ENCODE measurements at regions of chr4 and their contacts with region 1.

Region 1: DNA sequence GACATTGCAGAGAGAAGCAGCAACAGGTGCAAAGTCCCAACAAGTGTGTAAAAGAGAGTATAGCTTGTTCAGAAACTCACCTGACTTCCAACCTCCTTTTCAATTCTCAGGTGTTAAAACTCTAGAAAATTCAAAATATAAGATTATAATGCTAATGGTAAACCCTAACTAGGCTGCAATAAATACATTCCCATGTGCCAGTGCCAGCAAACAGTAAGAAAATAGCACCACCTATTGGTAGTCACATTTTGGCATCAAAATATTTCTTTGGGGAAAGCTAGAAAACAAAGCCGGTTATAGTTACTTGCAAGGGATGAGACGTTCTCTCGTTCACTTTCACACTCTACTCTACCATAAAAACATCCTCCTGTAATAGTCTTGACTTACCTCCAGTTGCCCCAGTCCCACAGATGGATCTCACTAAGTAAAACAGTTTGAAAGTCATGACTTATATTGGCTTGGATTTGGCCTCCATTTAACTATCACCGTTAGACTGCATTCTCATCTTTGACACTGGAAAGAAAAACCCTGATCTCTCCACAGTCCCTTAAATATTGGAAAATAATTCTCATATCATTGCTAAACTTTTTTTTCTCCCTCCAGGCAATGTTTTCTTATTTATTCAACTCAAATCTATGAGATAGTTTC is 9.6 kb downstream of the BMP3 start:
- DNase-seq: no peak
- ATAC-seq: peak; percentile 42
- H3K4me3 Mint-ChIP-seq: no peak overlapping the region
- H3K27ac Mint-ChIP-seq: no peak overlapping the region
- H3K4me1 Mint-ChIP-seq: peaks cover 16% of the 10 kb centered on the region
- H3K27me3 Mint-ChIP-seq: no peaks in the 10 kb centered on the region
- CTCF ChIP-seq: peak; percentile 62

Region 2: DNA sequence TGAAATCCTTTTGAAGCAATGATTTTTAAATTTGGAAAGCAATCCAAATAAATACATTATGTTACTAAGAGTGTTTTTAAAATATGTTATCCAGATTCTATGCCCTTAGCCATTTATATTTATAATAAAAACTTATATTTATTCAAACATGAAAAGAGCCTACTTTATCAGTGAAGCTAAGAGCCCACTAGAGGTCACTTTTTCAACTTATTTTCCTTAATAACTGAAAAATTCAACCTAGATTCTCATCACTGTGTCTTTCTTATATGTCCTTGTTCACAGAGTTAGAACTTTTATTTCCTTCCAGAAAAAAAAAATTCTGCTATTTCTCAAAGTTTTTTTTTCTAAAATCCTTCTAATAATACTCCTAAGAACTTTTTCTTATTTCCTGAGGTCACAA is 819.0 kb before region 1 on chr4:
- CTCF ChIA-PET with region 1: interaction called, 6 read pairs
- POLR2A ChIA-PET with region 1: no interaction called
- intact Hi-C with region 1: loop called (anchors 1 kb)
- DNase-seq: no peak
- ATAC-seq: no peak
- H3K4me3 Mint-ChIP-seq: no peak overlapping the region
- H3K27ac Mint-ChIP-seq: no peak overlapping the region
- H3K4me1 Mint-ChIP-seq: no peaks in the 10 kb centered on the region
- H3K27me3 Mint-ChIP-seq: peaks cover 19% of the 10 kb centered on the region
- CTCF ChIP-seq: no peak

Region 3: GRCh38 chr4:80365928-80366327 is 674.2 kb before region 1 on chr4:
- CTCF ChIA-PET with region 1: interaction called, 117 read pairs
- POLR2A ChIA-PET with region 1: no interaction called
- intact Hi-C with region 1: loop called (anchors 1 kb)
- DNase-seq: no peak
- ATAC-seq: peak; percentile 74
- H3K4me3 Mint-ChIP-seq: no peak overlapping the region
- H3K27ac Mint-ChIP-seq: no peak overlapping the region
- H3K4me1 Mint-ChIP-seq: peaks cover 4% of the 10 kb centered on the region
- H3K27me3 Mint-ChIP-seq: peaks cover 2% of the 10 kb centered on the region
- CTCF ChIP-seq: no peak

Region 4: DNA sequence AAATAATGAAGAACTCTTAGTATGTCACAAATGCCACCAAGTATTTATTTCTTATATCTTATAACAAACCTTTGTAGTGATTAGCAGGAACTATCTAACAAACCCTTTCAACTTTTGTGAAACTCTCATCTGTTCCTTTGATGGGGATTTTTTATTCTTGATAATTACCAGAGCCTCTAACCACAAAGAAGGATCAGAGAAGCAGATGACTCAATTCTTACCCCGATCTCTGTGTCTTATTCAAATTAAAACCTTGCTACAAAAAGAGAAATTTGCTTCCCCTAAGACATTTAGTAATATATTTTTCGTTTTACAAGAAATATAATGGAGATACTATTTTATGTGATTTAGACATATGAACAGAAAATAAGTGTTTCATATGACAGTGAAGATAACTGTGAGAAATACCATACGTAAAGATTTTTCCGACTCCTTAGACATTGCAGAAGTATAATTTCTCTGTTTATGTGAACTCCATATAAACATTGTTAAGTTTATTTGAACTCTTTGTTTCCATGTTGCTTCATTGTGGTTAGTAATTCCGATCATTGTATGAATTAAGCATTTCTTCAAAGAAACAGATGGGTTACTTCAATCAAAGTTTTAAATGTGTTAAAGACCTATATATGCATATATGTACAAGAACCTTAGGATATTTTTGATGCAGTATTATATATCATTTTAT is 499.2 kb before region 1 on chr4:
- CTCF ChIA-PET with region 1: no interaction called
- POLR2A ChIA-PET with region 1: no interaction called
- intact Hi-C with region 1: loop called (anchors 5 kb)
- DNase-seq: no peak
- ATAC-seq: peak; percentile 84
- H3K4me3 Mint-ChIP-seq: no peak overlapping the region
- H3K27ac Mint-ChIP-seq: no peak overlapping the region
- H3K4me1 Mint-ChIP-seq: peaks cover 13% of the 10 kb centered on the region
- H3K27me3 Mint-ChIP-seq: peaks cover 7% of the 10 kb centered on the region
- CTCF ChIP-seq: no peak

Region 5: GRCh38 chr4:80619070-80619674 is 421.0 kb before region 1 on chr4:
- CTCF ChIA-PET with region 1: interaction called, 4 read pairs
- POLR2A ChIA-PET with region 1: no interaction called
- intact Hi-C with region 1: loop called (anchors 1 kb)
- DNase-seq: no peak
- ATAC-seq: no peak
- H3K4me3 Mint-ChIP-seq: no peak overlapping the region
- H3K27ac Mint-ChIP-seq: no peak overlapping the region
- H3K4me1 Mint-ChIP-seq: no peaks in the 10 kb centered on the region
- H3K27me3 Mint-ChIP-seq: no peaks in the 10 kb centered on the region
- CTCF ChIP-seq: no peak

Region 6: DNA sequence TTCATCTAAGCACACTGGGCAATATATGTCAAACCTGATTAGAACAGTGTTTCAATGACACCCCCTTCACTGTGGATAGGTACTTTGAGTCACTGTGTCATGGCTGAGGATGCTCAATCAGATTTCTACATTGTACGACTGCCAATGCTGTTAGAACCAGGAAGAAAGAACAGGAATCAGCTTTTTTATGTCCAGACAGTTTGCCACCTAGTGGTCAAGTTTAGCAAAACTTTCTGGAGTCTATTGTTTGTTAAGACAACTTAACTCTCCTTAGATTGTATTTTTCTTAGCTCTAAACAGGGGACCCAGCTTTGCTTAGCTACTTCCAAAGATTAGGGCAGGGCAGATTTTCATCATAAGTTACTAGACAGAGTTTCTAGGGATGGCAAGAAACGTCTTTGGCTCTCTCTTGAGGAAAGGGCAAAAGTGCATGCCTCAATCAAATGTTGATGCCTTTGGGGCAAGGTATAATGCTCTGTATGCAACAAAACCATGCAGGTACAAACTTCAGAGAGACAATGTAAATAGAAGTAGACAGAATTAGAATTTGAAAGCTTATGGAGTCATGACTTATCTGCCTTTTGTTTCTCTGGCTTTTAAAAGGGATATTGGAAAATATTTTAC is 50.1 kb before region 1 on chr4:
- CTCF ChIA-PET with region 1: interaction called, 22 read pairs
- POLR2A ChIA-PET with region 1: no interaction called
- intact Hi-C with region 1: loop called (anchors 1 kb)
- DNase-seq: no peak
- ATAC-seq: peak; percentile 56
- H3K4me3 Mint-ChIP-seq: no peak overlapping the region
- H3K27ac Mint-ChIP-seq: no peak overlapping the region
- H3K4me1 Mint-ChIP-seq: peaks cover 31% of the 10 kb centered on the region
- H3K27me3 Mint-ChIP-seq: no peaks in the 10 kb centered on the region
- CTCF ChIP-seq: no peak

Region 7: GRCh38 chr4:81052119-81053068 is 12.3 kb after region 1 on chr4:
- CTCF ChIA-PET with region 1: interaction called, 21 read pairs
- POLR2A ChIA-PET with region 1: no interaction called
- intact Hi-C with region 1: no loop called
- DNase-seq: peak; percentile 31
- ATAC-seq: peak; percentile 84
- H3K4me3 Mint-ChIP-seq: no peak overlapping the region
- H3K27ac Mint-ChIP-seq: no peak overlapping the region
- H3K4me1 Mint-ChIP-seq: peaks cover 14% of the 10 kb centered on the region
- H3K27me3 Mint-ChIP-seq: no peaks in the 10 kb centered on the region
- CTCF ChIP-seq: no peak

Region 8: GRCh38 chr4:81106150-81106549 is 66.0 kb after region 1 on chr4:
- CTCF ChIA-PET with region 1: no interaction called
- POLR2A ChIA-PET with region 1: no interaction called
- intact Hi-C with region 1: no loop called
- DNase-seq: no peak
- ATAC-seq: no peak
- H3K4me3 Mint-ChIP-seq: no peak overlapping the region
- H3K27ac Mint-ChIP-seq: no peak overlapping the region
- H3K4me1 Mint-ChIP-seq: peaks cover 12% of the 10 kb centered on the region
- H3K27me3 Mint-ChIP-seq: no peaks in the 10 kb centered on the region
- CTCF ChIP-seq: no peak

Region 9: DNA sequence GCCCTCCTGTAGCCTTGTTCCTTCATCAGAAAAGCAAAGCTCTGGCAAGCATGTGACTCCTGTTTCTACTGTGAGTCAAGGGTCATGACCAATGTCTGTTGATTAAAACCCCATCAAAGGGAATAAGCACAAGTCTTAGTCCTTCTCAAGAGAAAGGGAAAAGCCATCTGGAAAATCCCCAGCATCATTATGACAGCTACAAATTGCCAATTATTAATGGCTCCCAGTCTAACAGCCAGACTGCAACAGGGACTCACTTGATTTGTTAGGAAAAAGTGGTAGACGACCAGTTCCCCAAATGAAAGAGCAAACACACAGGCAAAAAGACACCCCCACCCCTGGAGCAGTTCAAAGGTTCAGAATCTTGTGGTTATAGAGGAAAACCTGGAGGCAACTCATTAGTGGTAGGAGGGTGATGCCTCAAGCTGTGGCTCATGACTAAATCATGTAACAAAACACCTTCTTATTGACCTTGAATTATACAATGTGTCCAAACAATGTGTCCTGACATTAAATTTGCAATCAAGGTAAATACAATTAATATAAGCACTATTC is 1017.9 kb after region 1 on chr4:
- CTCF ChIA-PET with region 1: no interaction called
- POLR2A ChIA-PET with region 1: no interaction called
- intact Hi-C with region 1: no loop called
- DNase-seq: no peak
- ATAC-seq: no peak
- H3K4me3 Mint-ChIP-seq: no peak overlapping the region
- H3K27ac Mint-ChIP-seq: no peak overlapping the region
- H3K4me1 Mint-ChIP-seq: no peaks in the 10 kb centered on the region
- H3K27me3 Mint-ChIP-seq: peaks cover 11% of the 10 kb centered on the region
- CTCF ChIP-seq: no peak